Ascending aorta (tissue), 2 donors: ENCODE measurements at regions of chr10 and their contacts with region 1.

Region 1: GRCh38 chr10:75235375-75236177 is at the start of gene COMTD1:
- DNase-seq: peak; percentile 68 to 96
- H3K4me3 ChIP-seq: peak within 1 kb of the TSS; percentile 79 to 80
- H3K27ac ChIP-seq: peak within 1 kb of the TSS; percentile 81 to 90
- H3K4me1 ChIP-seq: peaks cover 0 to 2% of the 10 kb centered on the region in 2 donors
- H3K27me3 ChIP-seq: no peaks in the 10 kb centered on the region
- CTCF ChIP-seq: peak; percentile 100
- total RNA-seq, gene COMTD1: 85.5 TPM

Region 2: GRCh38 chr10:74244097-74244685 is 991.4 kb before region 1 on chr10:
- intact Hi-C with region 1: loop called (anchors 5 kb)
- DNase-seq: no peak
- H3K4me3 ChIP-seq: no peak overlapping the region
- H3K27ac ChIP-seq: no peak overlapping the region
- H3K4me1 ChIP-seq: no peaks in the 10 kb centered on the region
- H3K27me3 ChIP-seq: no peaks in the 10 kb centered on the region
- CTCF ChIP-seq: peak; percentile 2 to 54 (median 45)

Region 3: GRCh38 chr10:74826142-74827044 is 409.2 kb before region 1 on chr10 and contains the start of gene KAT6B:
- intact Hi-C with region 1: loop called (anchors 2 kb)
- DNase-seq: peak; percentile 100
- H3K4me3 ChIP-seq: peak within 1 kb of the TSS; percentile 93 to 95
- H3K27ac ChIP-seq: peak within 1 kb of the TSS; percentile 98 to 99
- H3K4me1 ChIP-seq: peaks cover 14 to 36% of the 10 kb centered on the region in 2 donors
- H3K27me3 ChIP-seq: no peaks in the 10 kb centered on the region
- CTCF ChIP-seq: peak in 2 of 3 experiments; percentile 15 to 22
- total RNA-seq, gene KAT6B: 41.1 TPM

Region 4: GRCh38 chr10:75187961-75188426 is 47.6 kb before region 1 on chr10:
- intact Hi-C with region 1: loop called (anchors 2 kb)
- DNase-seq: no peak
- H3K4me3 ChIP-seq: no peak overlapping the region
- H3K27ac ChIP-seq: no peak overlapping the region
- H3K4me1 ChIP-seq: peaks cover 0 to 8% of the 10 kb centered on the region in 2 donors
- H3K27me3 ChIP-seq: no peaks in the 10 kb centered on the region
- CTCF ChIP-seq: peak; percentile 47 to 71 (median 55)

Region 5: GRCh38 chr10:75250910-75251309 is 15.3 kb after region 1 on chr10:
- intact Hi-C with region 1: no loop called
- DNase-seq: peak in 1 of 2 donors; percentile 37
- H3K4me3 ChIP-seq: no peak overlapping the region
- H3K27ac ChIP-seq: no peak overlapping the region
- H3K4me1 ChIP-seq: no peaks in the 10 kb centered on the region
- H3K27me3 ChIP-seq: no peaks in the 10 kb centered on the region
- CTCF ChIP-seq: no peak

Region 6: GRCh38 chr10:75294866-75295701 is 59.5 kb after region 1 on chr10:
- intact Hi-C with region 1: loop called (anchors 2 kb)
- DNase-seq: peak; percentile 60 to 93
- H3K4me3 ChIP-seq: peak overlapping the region; percentile 79 to 92
- H3K27ac ChIP-seq: peak overlapping the region; percentile 91 to 94
- H3K4me1 ChIP-seq: peaks cover 11 to 23% of the 10 kb centered on the region in 2 donors
- H3K27me3 ChIP-seq: no peaks in the 10 kb centered on the region
- CTCF ChIP-seq: peak in 2 of 3 experiments; percentile 20 to 51